HCT116 (cell line): ENCODE measurements at regions of chr2 and their contacts with region 1.

Region 1: GRCh38 chr2:117349687-117350086 is 464.8 kb upstream of the DDX18 start:
- DNase-seq: no peak
- ATAC-seq: no peak
- H3K4me3 ChIP-seq: no peak overlapping the region
- H3K27ac ChIP-seq: no peak overlapping the region
- H3K4me1 ChIP-seq: no peaks in the 10 kb centered on the region
- H3K27me3 ChIP-seq: no peaks in the 10 kb centered on the region
- CTCF ChIP-seq: no peak
- POLR2A ChIP-seq: no peak
- RAD21 ChIP-seq: no peak

Region 2: DNA sequence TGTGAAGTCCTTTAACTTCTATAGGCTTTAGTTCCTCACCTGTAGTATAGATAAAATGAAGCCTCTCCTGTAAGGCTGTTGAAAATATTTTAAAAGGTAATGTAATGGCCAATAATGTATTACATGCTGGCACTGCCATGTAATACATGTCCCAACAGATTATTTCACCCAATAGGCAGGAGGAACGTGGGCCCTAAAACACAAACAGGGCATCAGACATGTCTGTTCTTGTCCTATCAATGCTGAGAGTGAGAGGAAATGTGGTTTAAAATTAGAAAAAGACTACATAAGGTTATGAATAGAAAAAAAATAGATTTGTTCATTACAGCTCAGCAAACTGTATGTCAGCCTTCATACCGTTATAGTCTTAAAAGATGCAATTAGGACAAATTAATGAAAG is 27.9 kb before region 1 on chr2:
- CTCF ChIA-PET with region 1: no interaction called
- POLR2A ChIA-PET with region 1: no interaction called
- RAD21 ChIA-PET with region 1: no interaction called
- intact Hi-C with region 1: loop called (anchors 1 kb)
- DNase-seq: no peak
- ATAC-seq: no peak
- H3K4me3 ChIP-seq: no peak overlapping the region
- H3K27ac ChIP-seq: no peak overlapping the region
- H3K4me1 ChIP-seq: no peaks in the 10 kb centered on the region
- H3K27me3 ChIP-seq: no peaks in the 10 kb centered on the region
- CTCF ChIP-seq: no peak
- POLR2A ChIP-seq: no peak
- RAD21 ChIP-seq: no peak

Region 3: DNA sequence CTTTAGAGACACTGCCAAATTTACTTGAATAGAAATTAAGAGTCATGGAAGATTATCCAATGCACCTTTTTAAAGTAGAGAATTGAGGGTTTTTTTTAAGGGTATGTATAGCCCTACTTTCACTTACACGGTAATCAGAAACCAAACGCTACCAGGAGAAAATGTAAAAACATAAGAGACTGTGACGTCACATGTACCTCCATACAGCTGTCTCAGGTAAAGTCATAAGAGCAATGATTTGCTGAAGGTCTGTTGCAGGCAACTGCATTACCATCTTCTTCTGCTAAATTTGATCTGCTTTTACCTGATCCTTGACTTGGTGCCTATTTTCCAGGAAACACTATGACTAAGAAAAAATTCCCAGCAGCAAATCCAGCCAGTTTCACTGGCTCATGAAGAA is 13.7 kb before region 1 on chr2:
- CTCF ChIA-PET with region 1: no interaction called
- POLR2A ChIA-PET with region 1: no interaction called
- RAD21 ChIA-PET with region 1: no interaction called
- intact Hi-C with region 1: no loop called
- DNase-seq: no peak
- ATAC-seq: no peak
- H3K4me3 ChIP-seq: no peak overlapping the region
- H3K27ac ChIP-seq: no peak overlapping the region
- H3K4me1 ChIP-seq: no peaks in the 10 kb centered on the region
- H3K27me3 ChIP-seq: no peaks in the 10 kb centered on the region
- CTCF ChIP-seq: no peak
- POLR2A ChIP-seq: no peak
- RAD21 ChIP-seq: no peak

Region 4: DNA sequence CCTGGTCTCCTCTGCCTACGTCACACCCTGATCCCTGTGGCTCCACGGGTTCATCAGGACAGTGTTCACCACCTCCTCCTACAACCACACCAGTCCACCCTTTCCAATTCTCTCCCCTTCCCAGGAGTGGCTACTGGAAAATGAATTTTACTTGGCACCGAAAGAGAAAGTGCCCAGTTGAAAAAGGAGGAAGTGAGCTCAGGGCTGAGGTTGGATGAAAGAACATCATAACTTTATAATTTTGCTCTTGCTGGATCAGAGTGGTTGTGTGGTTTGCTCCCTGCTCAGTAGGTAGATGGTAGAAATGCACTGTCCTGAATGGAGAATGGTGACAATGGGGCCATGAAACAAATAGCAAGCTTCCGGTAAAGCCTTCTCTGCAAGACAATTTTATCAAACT is 324.5 kb after region 1 on chr2:
- CTCF ChIA-PET with region 1: no interaction called
- POLR2A ChIA-PET with region 1: no interaction called
- RAD21 ChIA-PET with region 1: no interaction called
- intact Hi-C with region 1: no loop called
- DNase-seq: no peak
- ATAC-seq: no peak
- H3K4me3 ChIP-seq: no peak overlapping the region
- H3K27ac ChIP-seq: no peak overlapping the region
- H3K4me1 ChIP-seq: no peaks in the 10 kb centered on the region
- H3K27me3 ChIP-seq: no peaks in the 10 kb centered on the region
- CTCF ChIP-seq: no peak
- POLR2A ChIP-seq: no peak
- RAD21 ChIP-seq: no peak